ENCODE measurements at regions of chr5 and their contacts with region 1.

Region 1: GRCh38 chr5:98911280-98912040 is 17.3 kb downstream of the CHD1 start:
- DNase-seq: peak in 1 of 14 experiments; percentile 17
- ATAC-seq: no peak
- H3K4me3 ChIP-seq: no peak overlapping the region
- H3K4me3 Mint-ChIP-seq: peak overlapping the region; percentile 11
- H3K27ac ChIP-seq: no peak overlapping the region
- H3K27ac Mint-ChIP-seq: peak overlapping the region; percentile 5
- H3K4me1 ChIP-seq: peaks cover 11% of the 10 kb centered on the region
- H3K4me1 Mint-ChIP-seq: peaks cover 76% of the 10 kb centered on the region
- H3K27me3 ChIP-seq: no peaks in the 10 kb centered on the region
- H3K27me3 Mint-ChIP-seq: no peaks in the 10 kb centered on the region
- CTCF ChIP-seq: no peak

Region 2: DNA sequence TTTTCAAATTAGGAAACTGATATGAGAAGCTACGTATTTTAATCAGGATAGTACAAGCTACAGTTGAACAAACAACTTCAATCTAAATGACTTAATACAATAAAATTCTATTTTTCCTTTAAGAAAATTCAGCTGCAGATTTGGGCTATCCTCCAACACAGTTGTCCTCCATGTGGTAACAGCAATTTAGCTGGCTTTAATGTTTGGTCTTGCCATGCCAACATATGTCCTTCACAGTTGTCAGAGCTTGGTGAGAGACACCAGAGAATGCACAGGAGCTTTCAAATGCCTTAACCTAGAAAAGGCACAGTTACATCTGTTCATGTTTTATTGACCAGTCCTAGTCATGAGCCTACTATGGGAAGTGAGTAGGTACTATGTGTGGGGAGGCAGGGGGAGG is 1634.5 kb after region 1 on chr5:
- CTCF ChIA-PET with region 1: no interaction called
- POLR2A ChIA-PET with region 1: no interaction called
- intact Hi-C with region 1: loop called in 1 of 2 experiments (anchors 10 kb)
- DNase-seq: no peak
- ATAC-seq: no peak
- H3K4me3 ChIP-seq: no peak overlapping the region
- H3K4me3 Mint-ChIP-seq: no peak overlapping the region
- H3K27ac ChIP-seq: no peak overlapping the region
- H3K27ac Mint-ChIP-seq: no peak overlapping the region
- H3K4me1 ChIP-seq: peaks cover 3% of the 10 kb centered on the region
- H3K4me1 Mint-ChIP-seq: peaks cover 18% of the 10 kb centered on the region
- H3K27me3 ChIP-seq: no peaks in the 10 kb centered on the region
- H3K27me3 Mint-ChIP-seq: no peaks in the 10 kb centered on the region
- CTCF ChIP-seq: no peak